Heart right ventricle (tissue), 16 donors: ENCODE measurements at regions of chr1 and their contacts with region 1.

Region 1: DNA sequence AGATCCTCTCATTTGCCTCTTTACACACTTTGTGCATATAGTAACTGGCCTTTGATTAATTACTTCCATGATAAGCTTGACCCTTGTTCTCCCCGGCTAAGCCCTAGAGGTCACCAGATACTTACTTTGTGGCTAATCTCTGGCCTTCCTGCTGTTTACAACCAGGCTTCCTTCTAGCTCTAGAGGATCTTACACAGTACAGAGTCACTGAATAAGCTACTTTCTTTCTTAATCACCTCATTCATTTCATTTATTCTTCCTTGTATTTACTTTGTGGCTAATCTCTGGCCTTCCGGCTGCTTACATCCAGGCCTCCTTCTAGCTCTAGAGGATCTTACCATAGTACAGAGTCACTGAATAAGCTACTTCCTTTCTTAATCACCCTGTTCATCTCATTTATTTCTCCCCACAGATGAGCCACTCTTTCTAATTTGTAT is 144.3 kb upstream of the C1orf21 start:
- DNase-seq: peak in 1 of 2 donors; percentile 27
- ATAC-seq: peak; percentile 75 to 95 (median 92)
- H3K4me3 ChIP-seq: no peak overlapping the region
- H3K27ac ChIP-seq: peak overlapping the region in 4 of 10 donors; percentile 6 to 53 (median 45)
- H3K4me1 ChIP-seq: peaks cover 0 to 19% (median 10%) of the 10 kb centered on the region in 9 donors
- H3K27me3 ChIP-seq: no peaks in the 10 kb centered on the region
- CTCF ChIP-seq: peak; percentile 10 to 71 (median 43)

Region 2: GRCh38 chr1:184101141-184101540 is 141.4 kb before region 1 on chr1:
- intact Hi-C with region 1: no loop called
- DNase-seq: no peak
- ATAC-seq: no peak
- H3K4me3 ChIP-seq: no peak overlapping the region
- H3K27ac ChIP-seq: no peak overlapping the region
- H3K4me1 ChIP-seq: peaks cover 0 to 5% (median 0%) of the 10 kb centered on the region in 9 donors
- H3K27me3 ChIP-seq: no peaks in the 10 kb centered on the region
- CTCF ChIP-seq: no peak

Region 3: DNA sequence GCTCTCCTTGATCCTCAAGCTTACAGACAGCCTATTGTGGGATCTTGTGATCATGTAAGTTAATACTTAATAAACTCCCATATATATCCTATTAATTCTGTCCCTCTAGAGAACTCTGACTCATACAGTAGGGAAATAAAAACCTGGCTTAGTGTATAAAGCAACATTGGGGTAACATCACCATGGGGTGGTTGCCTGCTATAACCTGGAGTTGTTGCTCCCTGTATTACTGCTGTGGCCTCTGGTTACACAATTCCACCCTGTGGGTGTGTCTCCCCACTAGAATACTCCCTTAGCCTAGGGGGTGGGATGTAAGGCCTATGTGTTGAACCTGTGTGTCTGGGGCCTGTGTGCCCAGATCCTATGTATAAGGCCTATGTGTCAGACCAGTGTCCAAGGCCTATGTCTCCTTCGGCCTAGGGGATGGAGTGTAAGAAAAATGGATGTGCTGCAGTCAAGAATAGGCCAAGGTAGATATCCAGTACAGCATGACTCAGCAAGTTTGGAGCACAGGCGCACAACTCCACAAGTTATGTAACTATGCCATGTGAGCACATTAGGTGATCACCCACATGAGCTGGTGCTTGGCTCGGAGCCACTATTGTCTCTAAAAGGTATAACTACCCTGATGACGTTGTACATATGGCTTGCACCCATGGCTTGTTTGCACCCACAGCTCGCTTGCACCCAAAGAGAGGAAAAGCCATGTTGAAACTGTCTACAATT is 47.5 kb after region 1 on chr1:
- intact Hi-C with region 1: loop called in 2 of 10 experiments (anchors 5 kb)
- DNase-seq: no peak
- ATAC-seq: no peak
- H3K4me3 ChIP-seq: no peak overlapping the region
- H3K27ac ChIP-seq: no peak overlapping the region
- H3K4me1 ChIP-seq: peaks cover 0 to 23% (median 4%) of the 10 kb centered on the region in 9 donors
- H3K27me3 ChIP-seq: no peaks in the 10 kb centered on the region
- CTCF ChIP-seq: no peak

Region 4: GRCh38 chr1:184379111-184379946 is 136.8 kb after region 1 on chr1:
- intact Hi-C with region 1: loop called in 2 of 10 experiments (anchors 10 kb)
- DNase-seq: no peak
- ATAC-seq: peak in 5 of 8 donors; percentile 60 to 67 (median 65)
- H3K4me3 ChIP-seq: no peak overlapping the region
- H3K27ac ChIP-seq: no peak overlapping the region
- H3K4me1 ChIP-seq: peaks cover 0 to 8% (median 0%) of the 10 kb centered on the region in 9 donors
- H3K27me3 ChIP-seq: no peaks in the 10 kb centered on the region
- CTCF ChIP-seq: peak in 7 of 9 donors; percentile 7 to 50 (median 42)

Region 5: GRCh38 chr1:184465489-184466146 is 223.1 kb after region 1 on chr1:
- intact Hi-C with region 1: loop called in 1 of 10 experiments (anchors 2 kb)
- DNase-seq: peak in 1 of 2 donors; percentile 39
- ATAC-seq: peak in 7 of 8 donors; percentile 48 to 84 (median 66)
- H3K4me3 ChIP-seq: no peak overlapping the region
- H3K27ac ChIP-seq: peak overlapping the region in 4 of 10 donors; percentile 10 to 24 (median 18)
- H3K4me1 ChIP-seq: peaks cover 7 to 84% (median 36%) of the 10 kb centered on the region in 9 donors
- H3K27me3 ChIP-seq: no peaks in the 10 kb centered on the region
- CTCF ChIP-seq: peak in 8 of 9 donors; percentile 16 to 64 (median 40)